Endothelial cell of umbilical vein (primary cell): ENCODE measurements at regions of chr9 and their contacts with region 1.

Region 1: DNA sequence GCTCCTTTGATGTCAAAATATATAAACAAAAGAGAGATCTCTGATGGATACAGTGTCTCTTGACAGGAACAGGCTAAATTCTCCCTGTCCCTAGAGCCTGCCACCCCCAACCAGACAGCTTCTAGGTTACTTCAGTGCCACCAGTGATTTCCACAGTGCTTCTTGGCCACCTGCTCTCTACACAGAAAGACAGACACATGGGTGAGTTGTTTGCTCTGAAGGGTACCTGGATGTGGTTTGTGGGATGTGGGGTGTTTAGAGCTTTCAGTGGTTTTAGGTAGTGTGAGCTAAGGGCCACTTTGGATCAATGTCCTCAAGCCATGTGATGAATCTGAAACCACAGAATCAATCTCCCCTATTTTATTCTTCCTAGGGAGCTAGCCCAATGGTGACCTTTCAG is 125.4 kb downstream of the ANKRD18B start:
- DNase-seq: no peak
- H3K4me3 ChIP-seq: no peak overlapping the region
- H3K27ac ChIP-seq: no peak overlapping the region
- H3K4me1 ChIP-seq: no peaks in the 10 kb centered on the region
- H3K27me3 ChIP-seq: peaks cover 29 to 44% of the 10 kb centered on the region in 2 experiments
- CTCF ChIP-seq: no peak
- POLR2A ChIP-seq: no peak

Region 2: DNA sequence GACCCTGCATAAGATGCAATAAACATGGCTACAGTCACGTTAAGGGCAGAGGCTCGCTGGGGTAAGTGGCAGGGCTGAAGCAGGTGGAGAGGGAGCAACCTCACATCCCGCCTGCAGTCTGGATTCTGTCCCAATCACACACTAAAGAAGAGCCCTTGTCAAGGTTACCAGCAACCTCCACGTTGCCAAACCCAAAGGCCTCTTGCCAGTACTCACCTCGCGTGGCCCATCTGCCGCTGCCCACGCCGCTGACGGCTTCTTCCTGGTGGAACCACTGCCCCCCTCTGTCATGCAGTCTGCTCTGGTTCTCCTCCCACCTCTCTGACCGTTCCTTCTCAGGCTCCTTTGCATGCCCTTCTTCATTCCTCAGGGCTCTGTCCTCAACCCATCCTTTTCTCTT is 255.9 kb before region 1 on chr9:
- CTCF ChIA-PET with region 1: no interaction called
- POLR2A ChIA-PET with region 1: no interaction called
- dilution Hi-C with region 1: no loop called
- intact Hi-C with region 1: no loop called
- DNase-seq: no peak
- H3K4me3 ChIP-seq: no peak overlapping the region
- H3K27ac ChIP-seq: no peak overlapping the region
- H3K4me1 ChIP-seq: peaks cover 5% of the 10 kb centered on the region
- H3K27me3 ChIP-seq: no peaks in the 10 kb centered on the region
- CTCF ChIP-seq: no peak
- POLR2A ChIP-seq: no peak

Region 3: GRCh38 chr9:33489066-33489465 is 160.4 kb before region 1 on chr9:
- CTCF ChIA-PET with region 1: no interaction called
- POLR2A ChIA-PET with region 1: no interaction called
- dilution Hi-C with region 1: no loop called
- intact Hi-C with region 1: no loop called
- DNase-seq: no peak
- H3K4me3 ChIP-seq: no peak overlapping the region
- H3K27ac ChIP-seq: no peak overlapping the region
- H3K4me1 ChIP-seq: no peaks in the 10 kb centered on the region
- H3K27me3 ChIP-seq: no peaks in the 10 kb centered on the region
- CTCF ChIP-seq: no peak
- POLR2A ChIP-seq: no peak

Region 4: DNA sequence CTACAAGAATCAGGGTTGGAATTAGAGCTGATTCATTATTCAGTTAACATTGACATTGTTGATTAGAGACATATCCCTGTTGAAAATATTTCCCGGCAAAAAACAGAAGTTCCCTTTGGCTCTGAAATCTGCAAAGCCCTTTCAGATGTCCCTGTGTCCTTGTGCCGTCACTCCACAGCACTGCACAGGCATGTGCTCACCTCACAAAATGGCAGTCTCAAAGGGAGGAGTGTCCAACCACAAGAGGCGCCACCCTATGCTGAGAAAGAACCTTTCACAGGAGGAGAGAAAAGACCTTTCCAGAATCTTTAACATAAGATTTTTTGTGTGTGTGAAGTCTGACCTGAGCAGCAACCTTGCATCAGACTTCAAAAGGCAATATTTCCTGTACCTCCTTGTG is 33.1 kb after region 1 on chr9:
- CTCF ChIA-PET with region 1: no interaction called
- POLR2A ChIA-PET with region 1: no interaction called
- dilution Hi-C with region 1: no loop called
- intact Hi-C with region 1: loop called (anchors 2 kb)
- DNase-seq: no peak
- H3K4me3 ChIP-seq: no peak overlapping the region
- H3K27ac ChIP-seq: no peak overlapping the region
- H3K4me1 ChIP-seq: no peaks in the 10 kb centered on the region
- H3K27me3 ChIP-seq: peaks cover 24 to 59% of the 10 kb centered on the region in 2 experiments
- CTCF ChIP-seq: no peak
- POLR2A ChIP-seq: no peak